Activated CD4-positive, alpha-beta T cell treated with anti-CD3 and anti-CD28 coated beads for 36 hours (primary cell): ENCODE measurements at regions of chr22 and their contacts with region 1.

Region 1: GRCh38 chr22:23893943-23894709 is at the start of gene MIF:
- DNase-seq: peak; percentile 98
- ATAC-seq: peak; percentile 87
- H3K4me3 Mint-ChIP-seq: peak within 1 kb of the TSS; percentile 91
- H3K27ac Mint-ChIP-seq: peak within 1 kb of the TSS; percentile 98
- H3K4me1 Mint-ChIP-seq: peaks cover 23% of the 10 kb centered on the region
- H3K27me3 Mint-ChIP-seq: no peaks in the 10 kb centered on the region
- total RNA-seq, gene MIF: 1,478 to 1,739 TPM

Region 2: GRCh38 chr22:23069502-23070357 is 824.4 kb before region 1 on chr22:
- CTCF ChIA-PET with region 1: no interaction called
- POLR2A ChIA-PET with region 1: no interaction called
- intact Hi-C with region 1: loop called in 1 of 2 experiments (anchors 1 kb)
- DNase-seq: peak; percentile 91
- ATAC-seq: peak; percentile 99
- H3K4me3 Mint-ChIP-seq: peak overlapping the region; percentile 65
- H3K27ac Mint-ChIP-seq: peak overlapping the region; percentile 42
- H3K4me1 Mint-ChIP-seq: peaks cover 8% of the 10 kb centered on the region
- H3K27me3 Mint-ChIP-seq: peaks cover 14% of the 10 kb centered on the region

Region 3: GRCh38 chr22:23325183-23325582 is 568.9 kb before region 1 on chr22:
- CTCF ChIA-PET with region 1: no interaction called
- POLR2A ChIA-PET with region 1: no interaction called
- intact Hi-C with region 1: no loop called
- DNase-seq: no peak
- ATAC-seq: no peak
- H3K4me3 Mint-ChIP-seq: no peak overlapping the region
- H3K27ac Mint-ChIP-seq: no peak overlapping the region
- H3K4me1 Mint-ChIP-seq: peaks cover 11% of the 10 kb centered on the region
- H3K27me3 Mint-ChIP-seq: no peaks in the 10 kb centered on the region

Region 4: DNA sequence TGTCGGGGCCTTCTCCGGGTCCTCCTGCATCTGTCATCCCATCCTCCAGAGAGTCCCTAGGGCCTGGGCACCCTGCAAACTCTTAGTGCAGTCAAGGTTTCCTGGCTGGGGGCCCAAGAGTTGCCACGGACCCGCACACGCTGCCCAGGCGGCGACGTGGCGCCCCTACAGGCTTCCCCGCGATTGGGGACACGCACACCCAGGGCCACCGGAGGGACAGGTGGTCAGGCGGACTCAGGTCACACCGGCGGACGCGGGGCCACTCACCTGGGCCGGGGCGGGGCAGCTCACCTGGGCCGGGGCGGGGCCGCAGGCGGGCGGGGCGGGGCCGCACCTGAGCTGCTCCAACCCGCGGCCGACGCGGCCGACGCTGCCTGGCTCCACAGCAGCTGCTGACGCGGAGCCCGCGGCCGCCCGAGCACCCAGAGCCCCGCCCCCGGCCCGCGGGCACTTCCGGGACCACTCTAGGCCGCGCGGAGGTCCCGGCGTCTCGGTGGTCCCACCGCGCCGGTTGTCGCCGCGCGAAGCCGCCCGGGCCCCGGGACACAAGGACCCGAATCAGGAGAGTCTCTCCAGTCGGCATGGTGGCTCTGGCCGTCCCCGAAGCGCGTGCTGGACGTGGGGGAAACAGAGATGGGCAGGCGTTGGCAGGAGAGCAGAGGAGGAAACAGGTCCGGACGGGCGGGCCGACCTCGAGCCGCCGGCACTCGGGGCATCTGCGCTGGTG is 143.2 kb before region 1 on chr22 and contains the start of gene ZNF70:
- CTCF ChIA-PET with region 1: no interaction called
- POLR2A ChIA-PET with region 1: interaction called, 4 read pairs
- intact Hi-C with region 1: loop called in 1 of 2 experiments (anchors 1 kb)
- DNase-seq: peak; percentile 91
- ATAC-seq: peak; percentile 99
- H3K4me3 Mint-ChIP-seq: peak within 1 kb of the TSS; percentile 77
- H3K27ac Mint-ChIP-seq: peak within 1 kb of the TSS; percentile 56
- H3K4me1 Mint-ChIP-seq: peaks cover 11% of the 10 kb centered on the region
- H3K27me3 Mint-ChIP-seq: peaks cover 2% of the 10 kb centered on the region
- total RNA-seq, gene ZNF70: 1.6 to 1.7 TPM

Region 5: DNA sequence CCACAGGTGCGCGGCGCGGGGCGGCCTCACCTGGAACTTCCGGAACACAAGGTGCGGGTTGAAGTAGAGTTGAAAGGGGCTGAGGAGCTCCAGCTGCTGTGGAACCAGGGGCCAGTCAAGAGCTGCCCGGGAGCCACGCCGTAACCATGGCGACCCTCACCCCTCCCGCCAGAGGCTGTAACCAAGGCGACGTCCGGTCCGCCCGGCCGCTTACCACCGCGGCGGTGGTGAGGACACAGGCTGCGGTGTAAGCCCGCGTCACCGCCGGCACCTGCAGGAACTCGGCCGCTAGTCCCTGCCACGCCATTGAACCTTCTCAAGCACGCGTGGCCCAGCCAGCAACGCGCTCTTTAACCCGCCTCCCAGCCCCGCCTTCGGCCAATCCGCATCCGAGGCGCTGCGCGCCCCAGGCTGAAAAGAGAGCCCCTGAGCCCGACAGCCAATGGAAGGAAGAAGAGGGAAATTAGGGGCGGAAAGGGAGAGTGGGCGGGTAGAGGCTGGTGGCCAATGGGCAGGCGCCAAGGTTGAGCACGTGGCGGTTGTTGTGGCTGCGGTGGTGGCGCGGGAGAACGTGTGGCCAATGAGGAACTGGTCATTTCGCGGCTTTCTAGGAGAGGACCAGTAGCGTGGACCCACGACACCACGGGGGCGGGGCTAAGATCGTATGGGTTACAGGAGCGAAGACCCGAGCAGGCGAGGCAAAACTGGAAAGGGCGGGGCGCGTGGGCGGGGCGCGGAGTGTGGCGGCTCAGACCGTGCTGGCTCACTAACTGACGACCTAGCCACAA is 55.3 kb before region 1 on chr22 and contains the start of gene DERL3:
- CTCF ChIA-PET with region 1: no interaction called
- POLR2A ChIA-PET with region 1: no interaction called
- intact Hi-C with region 1: loop called in 1 of 2 experiments (anchors 1 kb)
- DNase-seq: peak; percentile 97
- ATAC-seq: peak; percentile 94
- H3K4me3 Mint-ChIP-seq: peak within 1 kb of the TSS; percentile 83
- H3K27ac Mint-ChIP-seq: peak within 1 kb of the TSS; percentile 80
- H3K4me1 Mint-ChIP-seq: peaks cover 19% of the 10 kb centered on the region
- H3K27me3 Mint-ChIP-seq: peaks cover 2% of the 10 kb centered on the region
- total RNA-seq, gene DERL3: 5.2 to 5.7 TPM

Region 6: DNA sequence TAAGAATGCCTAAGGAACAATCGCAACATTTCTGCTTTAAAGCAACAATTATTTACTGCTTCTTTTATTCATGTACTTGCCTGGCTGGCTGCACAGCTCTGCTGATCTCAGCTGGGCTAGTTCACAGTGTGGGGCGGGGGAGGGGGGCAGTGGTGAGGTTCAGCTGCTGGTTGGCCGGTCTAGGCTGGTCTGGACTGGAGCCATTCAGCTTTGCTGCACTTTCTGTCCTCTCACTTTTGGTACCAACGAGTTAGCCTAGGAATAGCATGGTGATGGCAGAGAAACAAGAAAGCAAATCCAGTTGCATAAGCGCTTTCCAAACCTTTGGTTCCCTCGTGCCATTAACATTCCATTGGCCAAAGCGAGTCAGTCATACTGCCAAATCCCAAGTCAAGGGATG is 15.9 kb before region 1 on chr22:
- CTCF ChIA-PET with region 1: interaction called, 12 read pairs
- POLR2A ChIA-PET with region 1: no interaction called
- intact Hi-C with region 1: no loop called
- DNase-seq: no peak
- ATAC-seq: no peak
- H3K4me3 Mint-ChIP-seq: no peak overlapping the region
- H3K27ac Mint-ChIP-seq: no peak overlapping the region
- H3K4me1 Mint-ChIP-seq: no peaks in the 10 kb centered on the region
- H3K27me3 Mint-ChIP-seq: no peaks in the 10 kb centered on the region

Region 7: GRCh38 chr22:23984430-23984829 is 90.3 kb after region 1 on chr22:
- CTCF ChIA-PET with region 1: no interaction called
- POLR2A ChIA-PET with region 1: no interaction called
- intact Hi-C with region 1: no loop called
- DNase-seq: peak; percentile 70
- ATAC-seq: peak; percentile 84
- H3K4me3 Mint-ChIP-seq: no peak overlapping the region
- H3K27ac Mint-ChIP-seq: peak overlapping the region; percentile 39
- H3K4me1 Mint-ChIP-seq: no peaks in the 10 kb centered on the region
- H3K27me3 Mint-ChIP-seq: peaks cover 2% of the 10 kb centered on the region

Region 8: GRCh38 chr22:24423519-24424000 is 529.4 kb after region 1 on chr22:
- CTCF ChIA-PET with region 1: no interaction called
- POLR2A ChIA-PET with region 1: no interaction called
- intact Hi-C with region 1: loop called in 1 of 2 experiments (anchors 2 kb)
- DNase-seq: peak; percentile 81
- ATAC-seq: peak; percentile 24
- H3K4me3 Mint-ChIP-seq: peak overlapping the region; percentile 94
- H3K27ac Mint-ChIP-seq: no peak overlapping the region
- H3K4me1 Mint-ChIP-seq: peaks cover 25% of the 10 kb centered on the region
- H3K27me3 Mint-ChIP-seq: peaks cover 3% of the 10 kb centered on the region